Left colon (tissue), 2 donors: ENCODE measurements at regions of chr20 and their contacts with region 1.

Region 1: DNA sequence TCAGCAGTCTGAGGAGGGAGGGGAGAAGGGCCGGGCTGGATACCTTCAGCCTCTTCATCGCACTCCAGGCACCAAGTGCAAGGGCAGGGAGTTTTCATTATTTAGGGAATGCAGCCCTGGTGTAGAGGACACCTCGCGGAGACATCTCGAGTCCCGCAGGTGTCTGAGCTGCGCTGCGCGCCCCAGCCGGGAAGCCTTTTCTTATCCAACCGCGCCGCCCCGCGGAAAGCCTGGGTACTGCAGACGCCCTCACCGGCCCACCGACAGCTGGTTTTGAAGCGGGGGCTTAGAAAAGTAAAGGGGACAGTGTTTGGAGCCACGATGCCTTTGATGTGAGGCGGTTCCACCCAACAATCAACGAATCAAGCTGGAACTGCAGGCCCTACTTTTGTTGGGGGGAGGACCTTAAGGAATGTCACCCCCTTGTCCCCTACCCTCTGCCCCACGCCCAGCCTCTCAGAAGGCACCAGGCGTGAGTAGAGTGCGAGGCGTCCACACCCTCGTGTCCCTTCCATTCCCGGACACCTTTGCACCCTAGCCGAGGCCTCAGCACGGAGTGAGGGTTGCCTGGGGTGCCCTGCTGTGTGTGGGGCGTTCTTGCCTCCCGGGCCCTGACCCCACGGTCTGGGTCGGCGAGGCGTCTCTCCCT is 8.6 kb downstream of the NKX2-2 start:
- DNase-seq: peak in 1 of 2 donors; percentile 79
- ATAC-seq: peak; percentile 77

Region 2: DNA sequence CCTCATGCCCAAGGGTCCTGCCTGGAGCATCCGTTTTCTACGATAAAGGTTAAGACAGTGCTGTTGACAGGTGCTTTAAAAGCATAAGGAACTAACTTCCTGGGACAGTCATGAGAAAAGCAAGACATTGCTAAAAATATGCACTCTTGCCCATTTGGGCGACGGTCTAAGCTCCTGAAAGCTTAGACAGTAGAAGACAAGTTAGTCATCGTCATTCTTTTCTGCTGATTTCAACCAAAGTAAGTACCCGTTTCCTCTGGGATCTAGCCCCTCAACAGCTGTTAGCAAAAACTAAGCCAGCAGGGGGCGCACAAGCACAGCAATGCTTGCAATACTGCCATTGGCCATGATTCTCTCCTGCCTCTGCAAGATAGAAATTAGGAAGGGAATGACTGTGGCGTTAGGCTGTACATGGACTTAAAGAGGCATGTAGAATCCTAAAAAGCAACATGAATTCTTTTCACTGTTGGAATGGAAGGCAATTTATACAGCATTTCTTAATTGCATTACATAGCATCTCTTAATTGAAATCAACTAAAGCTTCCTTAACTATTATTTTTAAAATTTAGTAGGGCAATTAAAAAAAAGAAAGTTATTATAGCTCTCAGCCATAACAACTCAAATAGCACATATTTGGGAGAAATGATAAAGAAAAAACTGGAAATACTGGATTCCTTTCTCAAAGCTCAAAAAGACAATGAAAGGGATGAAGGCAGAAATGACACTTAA is 645.0 kb before region 1 on chr20:
- intact Hi-C with region 1: loop called (anchors 5 to 10 kb)
- DNase-seq: peak; percentile 58 to 94
- ATAC-seq: peak; percentile 79

Region 3: GRCh38 chr20:21235484-21236445 is 269.5 kb before region 1 on chr20:
- intact Hi-C with region 1: loop called (anchors 5 to 10 kb)
- DNase-seq: peak; percentile 31 to 78
- ATAC-seq: peak; percentile 83